Mammary epithelial cell (primary cell): ENCODE measurements at regions of chr17 and their contacts with region 1.

Region 1: GRCh38 chr17:50114849-50115357 is 15.1 kb downstream of the SAMD14 start:
- DNase-seq: peak; percentile 37
- H3K4me3 ChIP-seq: no peak overlapping the region
- H3K27ac ChIP-seq: no peak overlapping the region
- H3K4me1 ChIP-seq: peaks cover 13% of the 10 kb centered on the region
- H3K27me3 ChIP-seq: no peaks in the 10 kb centered on the region
- CTCF ChIP-seq: peak; percentile 72 to 75

Region 2: DNA sequence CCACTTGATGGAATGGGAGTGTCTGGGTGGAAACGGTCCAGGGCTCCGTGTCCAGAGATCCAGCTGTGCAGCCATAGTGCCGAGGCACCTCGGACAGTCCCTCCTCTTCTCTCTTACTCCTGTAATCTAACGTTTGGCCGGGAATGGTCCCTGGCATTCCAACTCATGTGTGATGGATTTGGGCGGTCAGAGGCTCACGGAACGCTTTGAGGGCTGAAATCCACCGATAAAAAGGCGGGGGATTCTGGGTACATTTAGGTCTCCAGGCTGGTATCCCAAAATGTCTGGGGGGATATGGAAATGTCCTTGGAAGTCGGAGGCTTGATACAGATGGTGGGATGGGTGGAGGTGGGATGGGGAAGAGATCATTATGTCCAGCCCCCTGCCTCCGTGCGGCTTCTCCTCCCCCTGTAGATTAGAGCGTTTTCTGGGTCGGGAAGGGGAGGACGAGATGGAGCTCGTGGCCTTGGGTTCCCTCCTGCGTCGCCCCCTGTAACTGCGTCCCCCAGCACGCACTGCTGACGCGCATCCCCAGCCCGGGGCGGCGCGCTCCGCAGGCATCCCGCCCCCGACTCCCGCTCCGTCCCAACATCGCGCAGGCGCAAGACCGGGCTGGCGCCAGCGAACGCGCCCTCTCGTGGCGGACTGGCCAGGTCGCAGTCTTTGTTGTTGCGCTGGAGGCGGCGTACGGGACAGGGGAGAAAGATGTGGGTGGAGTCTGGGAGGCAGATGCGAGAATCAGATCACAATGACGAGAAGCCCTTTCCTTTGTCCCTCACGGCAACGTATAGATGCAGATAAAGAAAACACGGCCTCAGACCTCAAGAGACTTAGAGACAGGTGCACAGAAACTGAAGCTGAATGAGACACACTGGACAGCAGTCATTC is 46.4 kb after region 1 on chr17:
- CTCF ChIA-PET with region 1: no interaction called
- dilution Hi-C with region 1: no loop called
- in situ Hi-C with region 1: loop called in 1 of 2 experiments (anchors 5 kb)
- intact Hi-C with region 1: loop called (anchors 1 kb)
- DNase-seq: peak; percentile 81
- H3K4me3 ChIP-seq: peak overlapping the region; percentile 10 to 61 (median 55)
- H3K27ac ChIP-seq: no peak overlapping the region
- H3K4me1 ChIP-seq: peaks cover 12% of the 10 kb centered on the region
- H3K27me3 ChIP-seq: no peaks in the 10 kb centered on the region
- CTCF ChIP-seq: peak; percentile 84 to 96

Region 3: DNA sequence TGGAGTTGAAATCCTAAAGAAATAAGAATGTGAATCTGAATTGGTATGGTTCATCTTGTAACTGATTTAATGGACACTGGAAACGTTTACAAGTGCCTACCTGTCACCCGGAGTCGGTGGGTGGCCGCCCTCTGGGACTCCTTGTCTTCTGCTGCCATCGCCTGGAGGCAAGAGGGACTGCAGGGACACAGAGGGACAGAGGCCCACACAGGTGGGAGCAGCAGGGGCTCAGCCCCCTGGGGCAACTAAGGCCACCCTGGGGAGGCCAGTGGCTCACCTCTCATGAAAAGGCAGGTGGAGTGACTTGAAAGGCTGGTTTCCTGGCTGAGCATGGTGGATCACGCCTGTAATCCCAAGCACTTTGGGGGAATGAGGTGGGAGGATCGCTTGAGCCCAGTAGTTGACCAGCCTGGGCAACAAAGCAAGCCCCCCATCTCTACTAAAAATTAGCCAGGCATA is 182.5 kb after region 1 on chr17:
- CTCF ChIA-PET with region 1: no interaction called
- dilution Hi-C with region 1: no loop called
- in situ Hi-C with region 1: no loop called
- intact Hi-C with region 1: loop called (anchors 5 kb)
- DNase-seq: no peak
- H3K4me3 ChIP-seq: no peak overlapping the region
- H3K27ac ChIP-seq: no peak overlapping the region
- H3K4me1 ChIP-seq: no peaks in the 10 kb centered on the region
- H3K27me3 ChIP-seq: no peaks in the 10 kb centered on the region
- CTCF ChIP-seq: peak; percentile 82 to 93